Right cardiac atrium (tissue), 5 donors: ENCODE measurements at regions of chr1 and their contacts with region 1.

Region 1: DNA sequence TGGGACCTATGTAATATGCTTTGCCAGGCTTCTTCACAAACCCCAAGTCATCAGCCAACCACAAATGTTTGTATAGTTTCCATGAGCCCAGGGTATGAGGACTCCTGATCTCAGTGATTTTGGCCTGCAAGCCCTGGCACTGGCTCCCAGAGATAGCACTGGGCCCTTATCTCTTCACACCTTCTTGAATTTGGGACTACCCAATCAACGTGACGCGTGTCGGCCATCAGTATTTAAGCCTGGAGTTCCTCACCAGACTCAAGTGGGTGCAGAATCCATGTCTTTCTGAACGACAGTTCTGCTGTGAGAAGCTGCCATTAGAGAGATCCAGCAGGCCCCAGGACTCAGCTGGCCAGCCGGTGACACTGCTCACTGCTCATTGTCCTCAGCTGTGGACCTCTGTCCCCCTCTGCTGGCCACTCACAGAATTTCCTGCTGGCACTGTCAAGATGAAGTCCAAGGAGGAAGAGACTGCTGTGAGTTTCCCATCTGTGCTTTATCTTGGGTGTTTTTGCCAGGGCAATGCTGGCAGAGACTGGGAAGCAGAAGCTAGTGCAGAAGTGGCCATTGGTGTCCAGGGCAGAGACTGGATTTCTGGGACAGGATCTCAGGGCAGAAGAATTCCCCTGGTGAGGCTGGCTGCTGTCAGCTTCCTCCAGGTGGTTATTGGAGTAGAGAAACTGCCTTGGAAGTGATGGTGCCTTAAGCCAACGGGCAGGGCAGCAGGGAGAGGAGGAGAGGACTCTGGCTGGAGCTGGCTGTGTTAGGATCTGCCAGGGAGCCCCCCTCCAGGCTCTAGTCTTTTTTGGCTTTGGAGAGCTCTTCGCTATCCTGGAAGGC is 28.4 kb downstream of the TMCC2 start:
- DNase-seq: peak; percentile 89 to 96 (median 94)
- ATAC-seq: peak; percentile 88 to 91
- H3K4me3 ChIP-seq: no peak overlapping the region
- H3K27ac ChIP-seq: peak overlapping the region; percentile 48
- H3K4me1 ChIP-seq: peaks cover 10% of the 10 kb centered on the region
- H3K27me3 ChIP-seq: no peaks in the 10 kb centered on the region

Region 2: GRCh38 chr1:204980840-204981405 is 275.2 kb before region 1 on chr1:
- intact Hi-C with region 1: loop called in 3 of 4 experiments (anchors 5 to 10 kb)
- DNase-seq: no peak
- ATAC-seq: no peak
- H3K4me3 ChIP-seq: no peak overlapping the region
- H3K27ac ChIP-seq: no peak overlapping the region
- H3K4me1 ChIP-seq: no peaks in the 10 kb centered on the region
- H3K27me3 ChIP-seq: no peaks in the 10 kb centered on the region

Region 3: GRCh38 chr1:204989266-204990058 is 266.7 kb before region 1 on chr1:
- intact Hi-C with region 1: loop called (anchors 5 to 10 kb)
- DNase-seq: peak; percentile 63 to 80 (median 79)
- ATAC-seq: peak; percentile 60 to 71
- H3K4me3 ChIP-seq: no peak overlapping the region
- H3K27ac ChIP-seq: no peak overlapping the region
- H3K4me1 ChIP-seq: no peaks in the 10 kb centered on the region
- H3K27me3 ChIP-seq: no peaks in the 10 kb centered on the region

Region 4: DNA sequence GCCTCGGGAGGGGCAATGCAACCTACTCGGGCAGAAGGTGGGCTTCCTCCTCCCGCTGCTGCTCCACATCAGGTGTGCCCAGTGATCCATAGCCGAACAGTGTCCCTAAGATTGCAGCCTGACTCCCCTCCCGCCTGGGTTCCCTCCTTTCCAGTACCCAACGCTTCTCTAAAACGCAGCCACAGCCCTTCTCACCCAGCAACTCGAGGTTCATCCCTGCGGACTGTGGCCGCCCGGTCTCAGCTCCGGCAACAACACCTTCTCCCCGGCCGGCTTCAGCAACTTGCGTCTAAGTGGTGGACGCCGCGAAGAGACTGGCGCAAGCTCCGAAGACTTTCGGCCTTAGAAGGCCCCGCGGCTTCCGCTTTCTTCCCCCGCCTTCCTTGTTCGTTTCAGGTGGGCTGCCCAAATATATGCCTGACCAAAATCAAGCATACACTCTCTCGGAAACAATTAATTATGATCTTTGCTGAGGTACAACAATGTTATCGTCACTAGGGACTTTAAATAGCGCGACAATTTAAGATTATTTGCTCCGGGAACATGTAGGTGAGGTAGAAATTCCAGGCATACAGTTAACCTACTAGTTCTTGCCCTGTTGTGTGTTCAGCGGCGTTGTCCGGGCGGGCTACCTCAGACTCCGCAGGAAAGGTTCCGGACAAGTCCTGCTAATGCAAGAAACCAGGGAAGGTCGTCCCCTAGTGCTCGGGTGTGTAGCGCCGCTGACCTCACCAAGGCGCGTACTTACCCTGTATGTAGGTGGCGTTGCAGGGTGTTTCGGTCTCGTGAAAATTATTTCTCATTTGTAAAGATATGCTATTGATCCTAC is 134.3 kb before region 1 on chr1 and contains the start of gene RBBP5:
- intact Hi-C with region 1: loop called in 2 of 4 experiments (anchors 5 kb)
- DNase-seq: peak; percentile 93 to 98 (median 97)
- ATAC-seq: peak; percentile 98 to 99
- H3K4me3 ChIP-seq: peak within 1 kb of the TSS; percentile 96
- H3K27ac ChIP-seq: peak within 1 kb of the TSS; percentile 73
- H3K4me1 ChIP-seq: no peaks in the 10 kb centered on the region
- H3K27me3 ChIP-seq: no peaks in the 10 kb centered on the region
- total RNA-seq, gene RBBP5: 9.9 to 13.1 (median 11.7) TPM

Region 5: DNA sequence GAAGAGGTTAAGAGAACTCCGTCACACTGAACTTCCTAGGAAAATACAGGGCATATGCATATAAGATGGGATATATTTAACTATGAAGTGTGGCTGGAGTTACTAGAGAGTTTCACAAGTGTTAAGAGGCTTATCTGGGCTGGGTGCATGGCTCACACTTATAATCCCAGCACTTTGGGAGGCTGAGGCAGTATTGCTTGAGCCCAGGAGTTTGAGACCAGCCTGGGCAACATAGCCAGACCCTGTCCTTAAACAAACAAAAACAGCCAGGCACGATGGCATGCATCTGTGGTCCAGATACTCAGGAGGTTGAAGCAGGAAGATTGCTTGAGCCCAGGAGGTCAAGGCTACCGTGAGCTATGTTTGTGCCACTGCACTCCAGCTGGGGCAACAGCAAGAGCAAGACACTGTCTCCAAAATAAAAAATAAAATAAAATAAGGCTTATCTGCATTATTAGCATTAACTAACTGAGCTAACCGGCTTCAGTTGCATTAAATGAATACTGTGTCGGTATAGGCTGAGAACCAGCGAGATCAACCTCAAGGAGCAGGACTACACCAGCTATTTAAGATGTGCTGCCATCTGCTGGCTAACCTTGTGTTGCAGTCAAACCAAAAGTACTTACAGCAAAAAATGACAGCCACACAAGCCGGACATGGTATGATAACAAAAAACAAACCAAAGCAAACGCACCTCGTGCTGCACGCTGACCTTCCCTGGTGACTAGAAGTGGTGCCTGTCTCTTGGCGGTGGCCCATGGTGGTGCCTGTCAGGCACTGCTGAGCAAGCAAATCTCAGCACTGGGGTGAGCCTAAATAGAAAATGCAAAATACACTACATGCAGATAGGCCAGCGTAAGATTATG is 114.7 kb before region 1 on chr1:
- intact Hi-C with region 1: loop called in 2 of 4 experiments (anchors 10 kb)
- DNase-seq: peak; percentile 75 to 86 (median 77)
- ATAC-seq: peak; percentile 82 to 85
- H3K4me3 ChIP-seq: no peak overlapping the region
- H3K27ac ChIP-seq: no peak overlapping the region
- H3K4me1 ChIP-seq: peaks cover 2% of the 10 kb centered on the region
- H3K27me3 ChIP-seq: no peaks in the 10 kb centered on the region

Region 6: DNA sequence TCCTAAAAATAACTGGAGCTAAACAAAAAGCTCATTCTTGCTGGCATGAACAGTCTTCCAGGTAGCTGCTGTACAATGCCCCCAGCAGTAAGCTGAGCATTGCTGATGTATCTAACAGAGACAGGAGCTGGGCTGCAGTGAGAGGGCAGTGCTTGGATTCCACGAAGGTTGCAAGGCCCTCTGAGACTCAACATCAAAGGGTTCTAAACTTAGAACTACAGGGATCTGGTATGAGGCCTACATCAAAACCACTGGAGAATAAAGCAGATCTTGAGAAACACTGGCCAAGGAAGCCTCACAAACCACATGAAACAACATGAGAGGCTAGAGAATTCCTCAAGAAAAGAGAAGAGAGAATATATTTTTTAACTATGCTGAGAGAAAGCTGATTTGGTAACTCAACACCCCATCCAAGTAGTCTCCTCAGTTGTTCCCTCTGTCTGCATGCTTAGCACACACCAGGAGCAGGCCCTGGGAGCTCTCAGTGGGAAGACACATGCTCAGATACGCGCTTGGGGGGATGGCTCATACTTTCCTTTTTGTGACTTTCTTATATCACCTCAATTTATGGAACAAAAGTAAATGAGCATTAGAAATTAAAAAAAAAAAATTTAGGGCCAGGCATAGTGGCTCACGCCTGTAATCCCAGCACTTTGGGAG is 72.4 kb before region 1 on chr1:
- intact Hi-C with region 1: loop called in 1 of 4 experiments (anchors 10 kb)
- DNase-seq: no peak
- ATAC-seq: peak; percentile 32 to 48
- H3K4me3 ChIP-seq: no peak overlapping the region
- H3K27ac ChIP-seq: peak overlapping the region; percentile 20
- H3K4me1 ChIP-seq: peaks cover 2% of the 10 kb centered on the region
- H3K27me3 ChIP-seq: no peaks in the 10 kb centered on the region

Region 7: GRCh38 chr1:206050655-206051235 is 794.6 kb after region 1 on chr1:
- intact Hi-C with region 1: no loop called
- DNase-seq: no peak
- ATAC-seq: no peak
- H3K4me3 ChIP-seq: no peak overlapping the region
- H3K27ac ChIP-seq: no peak overlapping the region
- H3K4me1 ChIP-seq: peaks cover 2% of the 10 kb centered on the region
- H3K27me3 ChIP-seq: no peaks in the 10 kb centered on the region